ENCODE measurements at regions of chr19 and their contacts with region 1.

Region 1: GRCh38 chr19:4723367-4724187 is at the start of gene DPP9:
- DNase-seq: peak; percentile 92
- ATAC-seq: peak; percentile 94
- H3K4me3 Mint-ChIP-seq: peak within 1 kb of the TSS; percentile 98
- H3K27ac Mint-ChIP-seq: peak within 1 kb of the TSS; percentile 98
- H3K4me1 Mint-ChIP-seq: peaks cover 46% of the 10 kb centered on the region
- H3K27me3 Mint-ChIP-seq: peaks cover 7% of the 10 kb centered on the region
- CTCF ChIP-seq: no peak
- total RNA-seq, gene DPP9: 85.7 and 111 TPM in 2 replicates

Region 2: DNA sequence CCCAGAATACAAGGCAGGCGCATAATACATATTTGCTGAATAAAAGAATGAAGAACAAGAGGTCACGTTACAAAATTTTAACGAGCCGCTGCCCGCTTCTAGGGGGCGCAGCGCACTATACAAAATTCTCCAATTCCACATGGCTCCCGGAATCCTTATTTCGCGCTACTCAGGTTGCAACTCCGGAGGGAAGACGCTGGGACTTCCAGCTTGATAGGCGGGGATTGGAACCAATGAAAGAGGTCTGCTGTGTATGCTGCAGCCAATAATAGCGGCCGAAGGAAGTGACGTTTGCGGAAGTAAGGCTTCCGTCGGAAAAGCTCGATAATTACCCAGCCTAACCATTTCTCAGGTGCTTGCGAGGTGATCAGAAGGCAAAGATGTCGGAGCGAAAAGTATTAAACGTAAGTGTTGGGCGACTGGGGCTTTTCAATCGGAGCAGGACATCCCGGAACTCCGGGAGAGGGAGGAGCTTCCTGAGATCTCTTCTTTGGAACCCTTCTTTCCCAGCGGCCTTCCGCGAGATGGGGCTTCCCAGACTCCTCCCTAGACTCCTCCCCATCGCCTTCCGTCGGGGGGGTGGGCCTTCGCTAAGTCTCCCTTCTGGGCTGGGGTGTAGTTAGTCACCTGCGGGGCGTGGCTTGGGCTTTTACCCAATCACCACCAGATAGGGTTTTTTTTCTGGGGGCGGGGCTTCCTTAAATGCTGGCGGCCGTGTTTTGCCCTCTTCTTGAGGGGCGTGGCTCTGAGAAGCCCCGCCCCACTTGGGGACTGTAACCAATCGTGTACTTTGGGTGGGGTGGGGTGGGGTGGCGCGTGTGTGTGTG is 476.6 kb before region 1 on chr19 and contains the start of gene YJU2:
- CTCF ChIA-PET with region 1: no interaction called
- POLR2A ChIA-PET with region 1: interaction called, 5 read pairs
- intact Hi-C with region 1: loop called (anchors 1 kb)
- DNase-seq: peak; percentile 89
- ATAC-seq: peak; percentile 96
- H3K4me3 Mint-ChIP-seq: peak within 1 kb of the TSS; percentile 90
- H3K27ac Mint-ChIP-seq: peak within 1 kb of the TSS; percentile 96
- H3K4me1 Mint-ChIP-seq: peaks cover 35% of the 10 kb centered on the region
- H3K27me3 Mint-ChIP-seq: no peaks in the 10 kb centered on the region
- CTCF ChIP-seq: no peak
- total RNA-seq, gene YJU2: 40.7 and 43.0 TPM in 2 replicates

Region 3: DNA sequence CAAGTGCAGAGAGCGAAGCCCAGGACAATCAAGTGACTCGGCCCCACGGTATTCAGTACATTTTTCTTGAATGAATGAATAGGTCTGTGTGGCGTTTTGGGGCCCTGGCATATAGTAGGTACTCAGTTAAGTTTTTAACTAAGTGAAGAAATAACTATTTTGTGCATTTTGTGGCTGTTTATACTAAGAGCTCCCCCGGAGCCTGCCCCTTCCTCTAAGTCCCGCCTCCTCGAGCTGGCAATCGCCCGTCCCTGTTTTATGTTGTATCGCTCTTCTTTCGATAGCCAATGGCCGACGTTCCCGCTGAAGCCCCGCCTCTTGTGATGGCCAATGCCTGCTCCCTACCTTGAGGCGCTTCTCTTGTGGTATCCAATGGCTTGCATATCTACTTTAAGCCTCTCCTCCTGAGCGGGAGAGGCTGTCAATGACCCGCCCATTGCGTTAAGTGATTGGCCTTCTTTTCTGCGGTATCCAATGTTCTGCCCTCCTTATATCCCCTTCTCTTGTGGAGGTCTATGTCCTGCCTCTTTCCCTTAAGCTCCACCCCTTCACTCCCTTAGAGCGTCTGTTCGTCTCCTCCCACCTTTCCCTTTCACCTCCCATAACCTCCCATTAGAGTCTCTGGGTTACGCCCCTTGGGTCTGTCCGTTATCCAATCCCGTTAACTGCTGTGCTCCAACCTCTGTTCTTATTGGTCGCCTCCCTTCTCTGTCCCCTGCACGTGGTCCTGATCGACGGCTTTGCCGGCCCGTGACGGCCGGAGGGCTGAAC is 252.0 kb before region 1 on chr19:
- CTCF ChIA-PET with region 1: no interaction called
- POLR2A ChIA-PET with region 1: interaction called, 5 read pairs
- intact Hi-C with region 1: loop called (anchors 5 kb)
- DNase-seq: peak; percentile 83
- ATAC-seq: peak; percentile 86
- H3K4me3 Mint-ChIP-seq: no peak overlapping the region
- H3K27ac Mint-ChIP-seq: no peak overlapping the region
- H3K4me1 Mint-ChIP-seq: peaks cover 22% of the 10 kb centered on the region
- H3K27me3 Mint-ChIP-seq: no peaks in the 10 kb centered on the region
- CTCF ChIP-seq: no peak

Region 4: GRCh38 chr19:4567584-4568071 is 155.9 kb before region 1 on chr19:
- CTCF ChIA-PET with region 1: no interaction called
- POLR2A ChIA-PET with region 1: no interaction called
- intact Hi-C with region 1: no loop called
- DNase-seq: peak; percentile 35
- ATAC-seq: peak; percentile 60
- H3K4me3 Mint-ChIP-seq: no peak overlapping the region
- H3K27ac Mint-ChIP-seq: no peak overlapping the region
- H3K4me1 Mint-ChIP-seq: no peaks in the 10 kb centered on the region
- H3K27me3 Mint-ChIP-seq: peaks cover 5% of the 10 kb centered on the region
- CTCF ChIP-seq: no peak

Region 5: DNA sequence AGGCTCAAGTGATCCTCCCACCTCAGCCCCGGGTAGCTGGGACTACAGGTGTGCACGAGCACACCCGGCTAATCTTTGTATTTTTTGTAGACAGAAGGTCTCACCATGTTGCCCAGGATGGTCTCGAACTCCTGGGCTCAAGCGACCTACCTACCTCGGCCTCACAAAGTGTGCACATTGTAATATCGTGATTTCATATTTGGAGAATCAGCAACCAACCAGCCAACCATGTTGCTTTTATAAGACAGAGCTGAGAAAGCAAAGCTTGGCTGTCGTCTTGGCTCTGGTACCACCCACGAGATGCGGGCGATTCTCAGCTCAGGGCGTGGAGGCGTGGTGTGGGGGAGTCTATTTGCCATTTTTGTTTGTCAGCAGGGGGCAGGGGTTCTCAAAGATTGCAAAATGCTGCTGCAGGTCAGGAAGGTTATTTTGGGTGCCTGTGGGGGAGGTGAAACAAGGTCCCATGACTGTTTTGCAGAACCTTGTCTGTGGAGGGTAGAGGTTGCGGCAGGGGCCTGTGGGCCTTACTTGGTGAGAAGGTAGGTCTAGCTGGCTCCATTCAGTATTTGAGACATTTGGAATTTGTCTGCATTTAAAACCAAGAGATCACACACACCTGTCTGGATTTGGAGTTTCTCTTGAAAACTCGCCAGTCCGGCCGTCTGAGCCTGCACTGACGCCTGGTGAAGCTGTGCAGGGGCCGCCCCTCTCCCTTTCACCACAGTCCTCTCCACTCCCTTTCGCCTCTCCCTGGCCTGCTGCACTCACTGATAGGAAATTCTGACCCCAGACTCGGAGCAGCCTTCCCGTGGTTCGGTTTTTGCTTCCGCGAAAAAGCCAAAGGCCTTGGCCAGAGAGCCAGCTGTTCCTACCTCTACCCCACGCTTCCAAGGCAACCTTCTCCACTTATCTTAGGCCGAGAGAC is 68.9 kb before region 1 on chr19:
- CTCF ChIA-PET with region 1: no interaction called
- POLR2A ChIA-PET with region 1: no interaction called
- intact Hi-C with region 1: no loop called
- DNase-seq: no peak
- ATAC-seq: no peak
- H3K4me3 Mint-ChIP-seq: no peak overlapping the region
- H3K27ac Mint-ChIP-seq: peak overlapping the region; percentile 41
- H3K4me1 Mint-ChIP-seq: peaks cover 8% of the 10 kb centered on the region
- H3K27me3 Mint-ChIP-seq: no peaks in the 10 kb centered on the region
- CTCF ChIP-seq: no peak

Region 6: DNA sequence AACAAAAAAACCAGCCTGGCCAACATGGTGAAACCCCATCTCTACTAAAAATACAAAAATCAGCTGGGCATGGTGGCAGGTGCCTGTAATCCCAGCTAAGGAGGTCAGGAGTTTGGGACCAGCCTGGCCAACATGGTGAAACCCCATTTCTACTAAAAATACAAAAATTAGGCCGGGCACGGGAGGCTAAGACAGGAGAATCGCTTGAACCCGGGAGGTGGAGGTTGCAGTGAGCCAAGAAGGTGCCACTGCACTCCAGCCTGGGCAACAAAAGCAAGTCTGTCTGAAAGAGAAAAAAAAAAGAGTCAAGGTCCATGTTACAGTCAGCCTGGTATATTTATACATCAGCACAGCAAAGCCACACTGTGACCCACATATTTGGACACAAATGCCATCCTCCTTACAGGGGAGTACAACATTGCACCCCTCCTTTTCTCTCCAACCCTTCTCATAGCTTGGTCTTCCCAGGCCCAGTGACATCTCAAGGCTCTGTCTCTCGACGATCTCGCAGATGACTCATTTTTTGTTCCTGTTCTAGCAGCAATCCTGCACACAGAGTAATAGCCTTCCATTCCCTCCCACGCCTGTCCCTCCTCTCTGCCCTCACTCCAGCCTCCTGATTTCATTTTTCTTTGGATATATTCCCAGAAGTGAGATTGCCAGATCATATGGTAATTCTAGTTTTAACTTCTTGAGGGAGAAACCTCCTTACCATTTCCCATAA is 21.0 kb after region 1 on chr19:
- CTCF ChIA-PET with region 1: no interaction called
- POLR2A ChIA-PET with region 1: interaction called, 12 read pairs
- intact Hi-C with region 1: no loop called
- DNase-seq: no peak
- ATAC-seq: no peak
- H3K4me3 Mint-ChIP-seq: no peak overlapping the region
- H3K27ac Mint-ChIP-seq: no peak overlapping the region
- H3K4me1 Mint-ChIP-seq: no peaks in the 10 kb centered on the region
- H3K27me3 Mint-ChIP-seq: peaks cover 38% of the 10 kb centered on the region
- CTCF ChIP-seq: no peak

Region 7: DNA sequence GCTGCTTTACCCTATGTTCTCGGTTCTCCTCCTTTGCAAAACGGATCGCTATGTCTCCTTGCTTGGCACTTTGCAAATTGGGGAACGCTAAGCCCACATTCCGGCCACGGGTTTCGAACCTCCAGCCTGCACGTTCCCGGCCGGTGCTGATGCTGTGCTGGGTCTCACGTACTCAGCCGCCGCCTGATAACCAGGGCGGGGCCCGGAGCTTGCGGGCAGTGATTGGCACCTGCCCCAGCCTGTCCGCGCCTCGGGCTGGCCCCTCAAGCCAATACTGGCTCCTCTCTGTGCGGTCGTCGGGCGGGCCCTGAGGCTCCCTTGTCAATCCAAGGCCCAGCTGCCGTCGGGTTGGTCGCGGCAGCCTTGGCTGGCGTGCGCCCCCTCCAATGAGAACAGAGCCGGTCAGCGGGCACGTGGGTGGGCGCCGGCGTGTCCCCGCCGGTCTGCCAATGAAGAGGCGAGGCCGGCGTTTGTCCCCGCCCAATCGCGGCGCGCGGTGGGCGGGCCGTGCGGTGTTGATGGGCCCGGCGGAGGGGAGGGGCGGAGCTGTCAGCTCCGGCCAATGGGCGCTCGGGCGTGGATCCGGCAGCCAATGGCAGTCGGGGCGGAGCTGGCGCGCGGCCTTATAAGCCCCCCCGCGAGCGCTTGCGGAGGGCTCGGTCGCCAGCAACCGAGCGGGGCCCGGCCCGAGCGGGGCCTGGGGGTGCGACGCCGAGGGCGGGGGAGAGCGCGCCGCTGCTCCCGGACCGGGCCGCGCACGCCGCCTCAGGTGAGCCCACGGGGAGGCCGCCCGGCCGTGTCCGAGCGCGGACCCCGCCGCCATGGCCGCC is 245.1 kb after region 1 on chr19 and contains the start of gene KDM4B:
- CTCF ChIA-PET with region 1: no interaction called
- POLR2A ChIA-PET with region 1: interaction called, 14 read pairs
- intact Hi-C with region 1: loop called (anchors 1 kb)
- DNase-seq: peak; percentile 99
- ATAC-seq: peak; percentile 89
- H3K4me3 Mint-ChIP-seq: peak within 1 kb of the TSS; percentile 88
- H3K27ac Mint-ChIP-seq: peak within 1 kb of the TSS; percentile 88
- H3K4me1 Mint-ChIP-seq: peaks cover 31% of the 10 kb centered on the region
- H3K27me3 Mint-ChIP-seq: no peaks in the 10 kb centered on the region
- CTCF ChIP-seq: no peak
- total RNA-seq, gene KDM4B: 76.4 and 88.9 TPM in 2 replicates

Region 8: DNA sequence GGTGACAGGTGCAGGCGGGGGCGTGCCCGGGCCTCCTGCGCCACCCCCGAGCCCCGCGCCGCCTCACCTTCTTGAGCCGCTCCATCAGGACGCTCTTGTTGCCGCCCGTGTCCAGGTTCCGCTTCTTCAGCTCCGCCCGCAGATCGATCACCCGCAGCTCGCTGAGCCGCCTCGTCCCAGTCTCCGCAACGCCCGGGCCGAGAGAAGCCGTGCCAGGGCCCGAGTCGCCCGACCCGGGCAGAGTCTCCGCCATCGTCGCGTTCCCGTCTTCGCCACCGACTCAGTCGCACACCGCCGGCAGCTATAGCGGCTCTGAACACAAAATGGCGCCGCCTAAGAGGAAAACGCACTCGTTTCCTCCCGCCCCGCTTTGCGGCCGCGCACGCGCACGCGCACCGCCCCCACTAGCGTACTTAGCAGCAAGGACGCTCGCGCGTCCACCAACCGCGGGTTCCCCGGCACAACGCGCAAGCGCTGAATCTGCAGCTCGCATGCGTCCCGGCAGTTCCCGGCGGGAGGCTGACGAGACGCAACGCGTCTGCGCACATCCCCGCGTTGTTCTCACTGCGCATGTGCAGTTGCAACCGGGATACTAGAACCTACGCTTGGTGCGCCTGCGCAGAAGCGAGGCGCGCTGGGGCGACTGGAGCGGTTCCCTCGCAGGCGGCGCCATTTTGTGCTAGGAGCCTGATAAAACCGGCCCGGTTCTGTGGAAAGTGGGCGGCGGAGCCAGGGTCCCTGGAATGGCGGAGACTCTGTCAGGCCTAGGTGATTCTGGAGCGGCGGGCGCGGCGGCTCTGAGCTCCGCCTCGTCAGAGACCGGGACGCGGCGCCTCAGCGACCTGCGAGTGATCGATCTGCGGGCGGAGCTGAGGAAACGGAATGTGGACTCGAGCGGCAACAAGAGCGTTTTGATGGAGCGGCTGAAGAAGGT is 899.2 kb after region 1 on chr19 and contains the starts of genes SAFB and SAFB2:
- CTCF ChIA-PET with region 1: no interaction called
- POLR2A ChIA-PET with region 1: interaction called, 7 read pairs
- intact Hi-C with region 1: loop called (anchors 5 kb)
- DNase-seq: peak; percentile 98
- ATAC-seq: peak; percentile 79
- H3K4me3 Mint-ChIP-seq: peak within 1 kb of the TSS; percentile 100
- H3K27ac Mint-ChIP-seq: peak within 1 kb of the TSS; percentile 99
- H3K4me1 Mint-ChIP-seq: peaks cover 77% of the 10 kb centered on the region
- H3K27me3 Mint-ChIP-seq: peaks cover 2% of the 10 kb centered on the region
- CTCF ChIP-seq: no peak
- total RNA-seq, gene SAFB: 162 and 171 TPM in 2 replicates
- total RNA-seq, gene SAFB2: 123 and 143 TPM in 2 replicates

Measured in activated B cell treated with CpG ODN at 0.5 μM for 24 hours (primary cell).